Mammary epithelial cell (primary cell): ENCODE measurements at regions of chr2 and their contacts with region 1.

Region 1: DNA sequence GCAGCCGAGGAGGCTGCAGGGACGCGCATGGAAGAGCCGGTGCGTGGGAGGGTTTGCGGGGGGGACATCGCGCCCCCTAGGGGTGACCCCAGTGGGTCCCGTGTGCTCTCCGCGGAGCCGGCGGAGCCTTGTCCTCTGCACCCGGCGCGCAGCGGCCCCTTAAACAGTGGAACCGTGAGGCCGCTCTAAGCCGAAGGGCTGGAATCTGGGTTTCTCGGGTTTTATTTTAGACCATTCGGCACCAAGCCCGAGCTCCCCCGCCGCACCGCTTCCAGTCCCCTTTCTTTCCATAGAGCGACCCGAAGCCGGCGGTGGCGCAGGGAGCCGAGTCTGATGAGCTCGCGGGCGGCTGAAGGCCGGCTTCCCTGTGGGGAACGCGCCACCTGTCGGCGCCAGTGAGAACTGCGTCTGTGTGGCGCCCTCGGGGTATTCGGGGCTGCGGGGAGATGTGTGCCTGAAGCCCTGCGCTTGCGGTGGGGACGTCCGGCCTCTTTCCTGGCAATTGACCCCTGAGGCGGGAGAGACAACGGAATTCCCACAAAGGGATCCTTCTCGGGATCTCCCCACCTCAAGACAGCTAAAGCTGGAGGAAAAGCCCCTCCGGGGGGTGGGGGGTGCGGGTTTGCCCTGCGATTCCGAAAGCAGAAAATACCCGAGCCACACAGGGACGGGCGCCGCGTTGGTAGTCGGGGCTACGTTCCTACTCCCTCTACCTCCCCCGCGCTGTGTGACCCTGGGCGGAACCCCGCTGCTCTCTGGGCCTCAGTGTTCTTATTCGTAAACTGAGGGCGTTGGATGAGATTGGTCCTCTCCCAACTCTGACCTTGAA is 8.2 kb upstream of the EN1 start:
- DNase-seq: peak; percentile 59
- H3K4me3 ChIP-seq: peak overlapping the region in 2 of 3 experiments; percentile 25 to 32
- H3K27ac ChIP-seq: no peak overlapping the region
- H3K4me1 ChIP-seq: peaks cover 8% of the 10 kb centered on the region
- H3K27me3 ChIP-seq: peaks cover 83% of the 10 kb centered on the region
- CTCF ChIP-seq: peak; percentile 76 to 92

Region 2: DNA sequence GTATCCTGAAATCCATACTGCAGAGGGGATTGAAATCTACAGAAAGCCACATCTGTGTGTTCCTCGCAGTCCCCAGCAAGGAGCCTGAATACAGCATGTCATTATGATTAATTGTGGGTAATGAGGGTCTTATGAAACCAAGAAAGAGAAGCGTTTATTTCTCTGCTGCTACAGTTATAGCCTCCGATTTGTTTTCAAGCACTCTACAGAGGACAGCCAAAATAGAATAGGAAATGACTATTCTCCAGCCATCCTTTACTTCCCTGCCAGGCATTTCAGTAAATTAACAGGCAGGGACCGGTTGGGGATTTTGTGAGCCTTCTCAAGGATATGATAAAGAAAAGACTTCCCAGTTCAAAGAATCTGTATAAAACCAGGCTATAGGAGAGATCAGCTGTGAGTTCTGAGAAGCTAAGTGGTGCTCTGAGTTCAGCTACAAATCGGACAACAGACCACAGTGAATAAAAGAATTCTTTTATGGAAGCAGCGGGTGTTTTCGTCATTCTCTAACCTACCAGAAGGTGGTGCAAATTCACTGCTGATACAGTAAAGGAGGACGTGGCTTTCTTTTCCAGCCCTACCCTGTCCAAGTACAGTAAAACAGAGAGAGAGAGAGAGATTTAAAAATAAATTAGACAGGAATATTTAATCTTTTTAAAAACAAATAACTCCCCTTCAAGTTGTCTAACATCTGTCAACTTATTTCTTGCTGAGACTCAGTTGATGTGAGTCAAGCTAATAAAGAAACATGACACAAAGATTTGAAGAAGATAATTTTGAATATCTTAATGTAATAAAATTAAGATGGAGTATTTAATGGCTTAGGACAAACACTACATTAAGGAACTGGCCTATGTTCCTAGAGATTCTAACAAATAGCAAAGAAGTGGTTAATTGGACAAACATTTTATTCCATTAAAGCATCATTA is 633.7 kb before region 1 on chr2:
- CTCF ChIA-PET with region 1: no interaction called
- dilution Hi-C with region 1: loop called (anchors 5 kb)
- in situ Hi-C with region 1: loop called (anchors 5 to 10 kb)
- intact Hi-C with region 1: loop called (anchors 1 kb)
- DNase-seq: peak; percentile 59
- H3K4me3 ChIP-seq: no peak overlapping the region
- H3K27ac ChIP-seq: no peak overlapping the region
- H3K4me1 ChIP-seq: peaks cover 6% of the 10 kb centered on the region
- H3K27me3 ChIP-seq: peaks cover 24% of the 10 kb centered on the region
- CTCF ChIP-seq: peak; percentile 79 to 80

Region 3: GRCh38 chr2:118502106-118502505 is 353.6 kb before region 1 on chr2:
- CTCF ChIA-PET with region 1: no interaction called
- dilution Hi-C with region 1: no loop called
- in situ Hi-C with region 1: no loop called
- intact Hi-C with region 1: loop called (anchors 5 kb)
- DNase-seq: no peak
- H3K4me3 ChIP-seq: no peak overlapping the region
- H3K27ac ChIP-seq: no peak overlapping the region
- H3K4me1 ChIP-seq: no peaks in the 10 kb centered on the region
- H3K27me3 ChIP-seq: no peaks in the 10 kb centered on the region
- CTCF ChIP-seq: no peak

Region 4: DNA sequence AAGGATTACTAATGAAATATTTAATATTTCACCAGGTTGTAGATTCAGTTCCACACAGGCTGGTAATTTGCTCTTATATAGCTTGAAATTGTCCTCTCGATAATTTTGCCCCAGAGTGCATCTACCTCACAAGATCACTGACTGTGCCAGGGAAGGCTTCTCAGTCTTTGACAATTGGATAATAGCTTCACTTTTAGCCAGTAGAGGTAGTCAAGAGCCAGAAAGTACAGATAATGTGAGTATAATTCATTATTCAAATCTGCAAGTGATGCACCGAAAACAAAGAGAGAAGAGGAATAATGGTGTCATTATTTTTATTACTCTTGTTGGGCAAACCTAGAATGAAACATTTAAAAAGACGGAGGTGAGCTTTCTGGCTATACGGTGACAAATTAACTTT is 301.0 kb before region 1 on chr2:
- CTCF ChIA-PET with region 1: interaction called, 4 read pairs
- dilution Hi-C with region 1: no loop called
- in situ Hi-C with region 1: loop called in 1 of 2 experiments (anchors 25 kb)
- intact Hi-C with region 1: loop called (anchors 1 kb)
- DNase-seq: no peak
- H3K4me3 ChIP-seq: no peak overlapping the region
- H3K27ac ChIP-seq: no peak overlapping the region
- H3K4me1 ChIP-seq: no peaks in the 10 kb centered on the region
- H3K27me3 ChIP-seq: no peaks in the 10 kb centered on the region
- CTCF ChIP-seq: peak; percentile 39 to 51

Region 5: DNA sequence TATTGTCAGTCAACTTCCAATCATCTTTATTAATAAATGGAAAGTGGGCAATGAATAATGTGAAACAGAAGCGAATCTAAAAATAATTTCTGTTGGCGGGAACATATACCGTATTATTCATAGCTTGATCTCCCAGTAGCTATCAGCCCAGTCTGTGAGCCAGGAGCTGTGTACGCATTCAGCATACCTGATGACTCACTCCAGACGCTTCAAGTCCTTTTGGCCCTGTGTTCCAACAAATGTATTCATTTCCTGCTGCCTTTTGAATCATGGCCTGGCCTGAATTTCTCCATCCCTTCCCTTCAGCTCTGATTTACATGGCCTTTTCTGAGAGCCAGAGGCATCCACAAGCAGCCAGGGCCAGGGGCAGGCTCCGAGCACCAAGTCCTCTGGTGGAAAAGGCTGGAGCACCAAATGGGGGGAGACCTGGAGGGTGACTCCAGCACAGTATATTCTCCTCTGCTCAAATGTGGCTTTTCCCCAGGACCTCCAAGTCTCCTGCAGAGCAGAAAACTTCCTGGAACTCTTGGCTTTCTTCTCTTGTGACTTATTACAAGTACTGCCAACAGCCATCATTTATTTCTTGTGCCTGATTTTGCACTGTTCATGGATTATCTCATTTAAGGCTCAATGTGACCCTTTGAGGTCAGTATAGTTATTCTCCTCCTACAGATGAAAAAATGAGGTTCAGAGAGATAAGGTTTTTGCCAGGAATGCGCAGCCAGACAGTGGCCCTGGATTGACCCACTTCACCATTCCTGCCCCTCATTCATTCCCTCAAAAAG is 116.9 kb before region 1 on chr2:
- CTCF ChIA-PET with region 1: interaction called, 4 read pairs
- dilution Hi-C with region 1: no loop called
- in situ Hi-C with region 1: no loop called
- intact Hi-C with region 1: loop called (anchors 5 kb)
- DNase-seq: peak; percentile 93
- H3K4me3 ChIP-seq: no peak overlapping the region
- H3K27ac ChIP-seq: peak overlapping the region; percentile 63
- H3K4me1 ChIP-seq: peaks cover 14% of the 10 kb centered on the region
- H3K27me3 ChIP-seq: no peaks in the 10 kb centered on the region
- CTCF ChIP-seq: no peak